Naive thymus-derived CD4-positive, alpha-beta T cell (primary cell): ENCODE measurements at regions of chr2 and their contacts with region 1.

Region 1: DNA sequence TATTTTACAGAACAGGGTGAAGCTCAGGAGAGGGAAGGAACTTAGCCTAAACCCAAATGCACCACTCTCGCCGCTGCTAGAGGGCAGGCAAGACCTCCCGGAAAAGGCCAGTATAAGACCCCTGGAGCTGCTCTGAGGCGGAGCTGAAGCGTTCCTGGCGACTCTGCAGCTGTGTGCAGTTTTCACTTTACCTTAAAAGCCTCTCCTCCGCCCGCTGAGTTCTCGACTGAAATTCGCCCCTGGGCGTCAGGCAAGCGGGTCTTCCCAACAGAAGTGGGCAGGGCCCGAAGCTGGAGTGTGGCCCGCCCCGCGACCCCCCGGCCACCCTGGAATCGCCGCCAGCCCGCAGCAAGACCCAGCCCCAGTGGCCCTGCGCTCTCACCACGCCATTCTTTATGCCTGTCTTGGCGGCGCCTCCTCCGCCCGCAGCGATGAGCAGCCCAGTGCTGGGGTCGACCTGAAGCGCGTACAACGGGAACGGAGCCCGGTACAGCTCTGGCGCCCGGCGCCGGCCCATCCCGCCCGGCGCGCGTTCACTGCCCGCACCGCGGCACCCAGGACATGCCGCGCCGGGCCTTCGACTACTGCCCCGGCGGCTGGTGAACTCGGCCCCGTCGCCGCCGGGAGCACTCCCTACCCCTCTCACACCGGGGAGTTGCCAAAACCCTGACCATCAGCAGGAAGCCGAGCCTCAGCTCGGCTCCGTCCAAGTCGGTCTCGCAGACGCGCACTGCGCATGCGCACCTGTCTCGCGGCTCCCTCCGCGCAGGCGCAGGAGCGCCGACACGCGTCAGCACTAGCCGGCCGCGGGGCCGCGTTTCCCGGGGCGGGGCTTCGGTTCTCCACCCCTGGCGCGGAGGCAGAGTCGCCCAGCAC is at the start of gene PREB:
- DNase-seq: peak; percentile 92 to 100 (median 97)
- ATAC-seq: peak; percentile 97
- H3K4me3 ChIP-seq: peak within 1 kb of the TSS; percentile 96
- H3K4me3 Mint-ChIP-seq: peak within 1 kb of the TSS; percentile 88 to 97 (median 92)
- H3K27ac ChIP-seq: peak within 1 kb of the TSS; percentile 97
- H3K27ac Mint-ChIP-seq: peak within 1 kb of the TSS; percentile 88 to 99 (median 97)
- H3K4me1 ChIP-seq: peaks cover 12 to 13% of the 10 kb centered on the region in 2 donors
- H3K4me1 Mint-ChIP-seq: peaks cover 10 to 32% (median 21%) of the 10 kb centered on the region in 7 donors
- H3K27me3 ChIP-seq: no peaks in the 10 kb centered on the region
- H3K27me3 Mint-ChIP-seq: peaks cover 0 to 6% (median 0%) of the 10 kb centered on the region in 5 donors
- total RNA-seq, gene PREB: 25.4 to 72.3 (median 53.2) TPM

Region 2: GRCh38 chr2:26785431-26786206 is 348.5 kb before region 1 on chr2 and contains the start of gene CENPA:
- CTCF ChIA-PET with region 1: no interaction called
- POLR2A ChIA-PET with region 1: no interaction called
- intact Hi-C with region 1: loop called in 1 of 2 experiments (anchors 5 kb)
- DNase-seq: peak; percentile 86 to 98 (median 96)
- ATAC-seq: peak; percentile 100
- H3K4me3 ChIP-seq: peak within 1 kb of the TSS; percentile 78
- H3K4me3 Mint-ChIP-seq: peak within 1 kb of the TSS; percentile 81 to 97 (median 88)
- H3K27ac ChIP-seq: peak within 1 kb of the TSS; percentile 60
- H3K27ac Mint-ChIP-seq: peak within 1 kb of the TSS; percentile 65 to 97 (median 89)
- H3K4me1 ChIP-seq: peaks cover 0 to 4% of the 10 kb centered on the region in 2 donors
- H3K4me1 Mint-ChIP-seq: peaks cover 10 to 34% (median 11%) of the 10 kb centered on the region in 7 donors
- H3K27me3 ChIP-seq: no peaks in the 10 kb centered on the region
- H3K27me3 Mint-ChIP-seq: peaks cover 0 to 26% (median 24%) of the 10 kb centered on the region in 5 donors
- total RNA-seq, gene CENPA: 0.37 to 25.6 (median 0.73) TPM in 3 of 5 experiments, not detected in the others

Region 3: GRCh38 chr2:27050281-27050995 is 83.7 kb before region 1 on chr2:
- CTCF ChIA-PET with region 1: no interaction called
- POLR2A ChIA-PET with region 1: interaction called, 11 read pairs
- intact Hi-C with region 1: loop called (anchors 1 kb)
- DNase-seq: peak; percentile 77 to 95 (median 94)
- ATAC-seq: peak; percentile 76
- H3K4me3 ChIP-seq: peak overlapping the region; percentile 99
- H3K4me3 Mint-ChIP-seq: peak overlapping the region; percentile 86 to 100 (median 99)
- H3K27ac ChIP-seq: peak overlapping the region; percentile 84
- H3K27ac Mint-ChIP-seq: peak overlapping the region; percentile 96 to 100 (median 100)
- H3K4me1 ChIP-seq: peaks cover 8 to 15% of the 10 kb centered on the region in 2 donors
- H3K4me1 Mint-ChIP-seq: peaks cover 10 to 34% (median 19%) of the 10 kb centered on the region in 7 donors
- H3K27me3 ChIP-seq: no peaks in the 10 kb centered on the region
- H3K27me3 Mint-ChIP-seq: peaks cover 0 to 8% (median 4%) of the 10 kb centered on the region in 5 donors

Region 4: DNA sequence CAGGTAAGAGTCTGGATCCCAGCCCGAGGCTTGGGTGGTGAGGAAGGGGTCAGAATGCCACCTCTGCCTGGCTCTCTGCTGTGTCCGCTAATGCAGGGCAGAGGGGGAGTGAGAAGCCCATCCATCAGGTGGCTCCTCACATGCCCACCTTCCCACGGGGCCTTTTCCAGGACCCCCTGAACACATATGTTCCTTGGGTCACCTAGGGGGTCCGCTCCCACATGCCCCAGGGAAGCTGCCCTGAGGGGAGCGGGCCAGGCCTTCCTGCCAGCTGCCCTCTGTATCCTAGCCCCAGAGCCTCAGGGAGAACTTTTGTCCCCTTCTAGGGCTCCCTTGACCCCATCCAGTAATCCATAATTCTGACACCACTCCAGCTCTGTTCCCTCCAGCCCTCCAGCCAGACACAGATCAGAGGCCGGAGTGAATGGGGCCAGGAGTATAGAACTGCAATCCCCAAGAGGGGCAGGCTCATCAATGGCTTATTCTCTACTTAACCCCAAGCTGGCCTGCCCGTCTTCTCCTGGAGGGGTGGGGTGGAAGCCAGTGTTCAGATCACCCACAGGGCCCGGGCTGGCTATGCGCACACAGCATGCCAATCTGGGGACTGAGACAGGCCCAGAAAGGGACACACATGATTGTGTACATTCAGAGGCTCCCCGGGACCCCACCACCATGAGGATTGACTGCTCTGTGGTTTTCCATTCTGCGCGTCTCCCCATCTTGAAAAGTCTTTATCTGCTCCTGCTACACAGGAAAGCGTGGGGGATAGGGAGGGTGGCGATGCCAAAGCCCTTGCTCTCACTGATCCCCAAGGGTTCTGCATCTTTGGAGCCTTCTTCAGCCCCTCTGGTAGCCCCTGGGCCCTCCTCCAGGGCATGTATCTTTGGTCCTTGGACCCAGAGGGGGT is 54.7 kb before region 1 on chr2:
- CTCF ChIA-PET with region 1: no interaction called
- POLR2A ChIA-PET with region 1: interaction called, 7 read pairs
- intact Hi-C with region 1: loop called in 1 of 2 experiments (anchors 1 kb)
- DNase-seq: no peak
- ATAC-seq: no peak
- H3K4me3 ChIP-seq: no peak overlapping the region
- H3K4me3 Mint-ChIP-seq: no peak overlapping the region
- H3K27ac ChIP-seq: no peak overlapping the region
- H3K27ac Mint-ChIP-seq: peak overlapping the region in 4 of 9 donors; percentile 79 to 97 (median 96)
- H3K4me1 ChIP-seq: peaks cover 18 to 32% of the 10 kb centered on the region in 2 donors
- H3K4me1 Mint-ChIP-seq: peaks cover 27 to 53% (median 45%) of the 10 kb centered on the region in 7 donors
- H3K27me3 ChIP-seq: no peaks in the 10 kb centered on the region
- H3K27me3 Mint-ChIP-seq: no peaks in the 10 kb centered on the region

Region 5: DNA sequence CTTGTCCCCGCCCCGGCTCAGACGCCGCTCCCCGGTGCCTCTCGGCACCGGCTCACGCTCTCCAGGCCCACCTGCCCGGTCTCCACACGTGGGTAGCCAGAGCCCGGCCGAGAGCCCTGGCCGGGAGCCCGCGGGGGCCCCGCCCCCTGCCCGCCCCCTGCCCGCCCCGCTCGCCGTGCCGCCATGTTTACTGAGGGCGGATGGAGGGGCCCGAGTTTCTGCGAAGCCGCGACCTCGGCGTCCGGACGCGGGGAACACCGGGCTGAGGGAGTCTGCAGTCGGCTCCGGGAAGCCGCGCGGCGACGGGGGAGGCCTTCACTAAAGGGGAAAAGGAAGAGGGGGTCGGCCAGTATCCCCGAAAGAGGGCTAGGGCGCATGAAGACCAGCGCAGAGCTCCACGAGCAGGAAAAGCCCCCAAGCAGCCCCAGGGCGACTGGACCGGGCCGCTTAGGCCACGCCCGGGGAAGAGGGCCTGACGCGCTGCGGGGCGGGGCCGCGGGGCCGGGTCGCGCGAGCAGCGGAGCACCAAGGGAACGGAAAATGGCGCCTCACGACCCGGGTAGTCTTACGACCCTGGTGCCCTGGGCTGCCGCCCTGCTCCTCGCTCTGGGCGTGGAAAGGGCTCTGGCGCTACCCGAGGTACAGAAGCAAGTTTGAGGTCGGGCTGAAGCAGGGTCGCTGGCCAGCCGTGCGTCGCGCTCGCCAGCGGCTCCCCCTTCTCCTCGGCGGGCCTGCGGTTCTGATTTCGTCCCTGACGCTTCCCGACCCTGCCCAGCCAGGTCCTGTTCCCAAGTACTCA is 77.9 kb after region 1 on chr2 and contains the starts of genes ATRAID and SLC5A6:
- CTCF ChIA-PET with region 1: interaction called, 4 read pairs
- POLR2A ChIA-PET with region 1: interaction called, 5 read pairs
- intact Hi-C with region 1: loop called (anchors 1 kb)
- DNase-seq: peak; percentile 86 to 93 (median 92)
- ATAC-seq: peak; percentile 93
- H3K4me3 ChIP-seq: peak within 1 kb of the TSS; percentile 91
- H3K4me3 Mint-ChIP-seq: peak within 1 kb of the TSS; percentile 89 to 100 (median 99)
- H3K27ac ChIP-seq: peak within 1 kb of the TSS; percentile 100
- H3K27ac Mint-ChIP-seq: peak within 1 kb of the TSS; percentile 99 to 100 (median 100)
- H3K4me1 ChIP-seq: peaks cover 14 to 17% of the 10 kb centered on the region in 2 donors
- H3K4me1 Mint-ChIP-seq: peaks cover 18 to 49% (median 42%) of the 10 kb centered on the region in 7 donors
- H3K27me3 ChIP-seq: no peaks in the 10 kb centered on the region
- H3K27me3 Mint-ChIP-seq: no peaks in the 10 kb centered on the region
- total RNA-seq, gene ATRAID: 71.0 to 113 (median 90.7) TPM
- total RNA-seq, gene SLC5A6: 25.6 to 203 (median 44.3) TPM

Region 6: DNA sequence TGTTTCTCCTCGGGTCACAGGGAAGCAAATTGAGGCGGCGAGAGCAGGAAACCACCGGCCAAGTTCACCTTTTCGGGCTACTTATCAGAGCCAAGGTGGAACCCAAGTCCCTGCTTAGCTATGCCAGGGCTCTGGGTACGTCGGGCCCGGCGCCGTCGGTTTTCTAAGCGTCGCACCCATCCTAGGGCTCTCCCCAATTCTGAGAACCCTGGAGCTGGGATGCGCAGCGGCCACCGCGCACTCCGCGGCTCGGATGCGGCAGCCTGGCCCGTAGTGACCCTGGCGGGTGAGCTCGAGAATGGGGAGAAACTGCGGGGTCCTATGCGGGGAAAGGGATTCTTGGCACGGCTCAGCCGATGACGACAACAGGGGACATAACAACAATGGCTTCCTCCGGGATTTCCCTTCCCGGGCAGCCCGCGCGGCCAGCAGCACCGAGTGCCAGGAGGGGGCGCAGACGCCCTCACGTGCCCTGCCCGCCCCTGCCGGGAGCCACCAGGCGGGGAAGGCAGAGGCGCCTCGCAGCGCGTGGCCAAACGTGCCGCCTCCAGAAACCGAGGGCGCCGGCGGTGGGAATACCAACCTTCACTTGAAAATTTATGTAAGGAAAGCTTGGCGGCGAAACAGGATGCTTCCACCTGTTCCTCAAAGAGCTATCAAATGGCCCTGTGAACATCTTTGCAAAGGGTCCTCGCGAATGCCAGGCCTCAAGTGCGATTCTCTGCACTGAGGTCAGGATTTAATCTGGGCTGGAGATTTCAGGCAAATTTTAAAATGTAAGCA is 130.8 kb after region 1 on chr2:
- CTCF ChIA-PET with region 1: no interaction called
- POLR2A ChIA-PET with region 1: no interaction called
- intact Hi-C with region 1: loop called in 1 of 2 experiments (anchors 1 kb)
- DNase-seq: peak in 8 of 9 donors; percentile 39 to 63 (median 46)
- ATAC-seq: peak; percentile 85
- H3K4me3 ChIP-seq: peak overlapping the region; percentile 59
- H3K4me3 Mint-ChIP-seq: peak overlapping the region in 9 of 10 donors; percentile 59 to 97 (median 85)
- H3K27ac ChIP-seq: no peak overlapping the region
- H3K27ac Mint-ChIP-seq: peak overlapping the region in 2 of 9 donors; percentile 2 to 38
- H3K4me1 ChIP-seq: peaks cover 8 to 23% of the 10 kb centered on the region in 2 donors
- H3K4me1 Mint-ChIP-seq: peaks cover 23 to 33% (median 29%) of the 10 kb centered on the region in 7 donors
- H3K27me3 ChIP-seq: peaks cover 6 to 18% of the 10 kb centered on the region in 2 donors
- H3K27me3 Mint-ChIP-seq: peaks cover 34 to 47% (median 40%) of the 10 kb centered on the region in 5 donors

Region 7: DNA sequence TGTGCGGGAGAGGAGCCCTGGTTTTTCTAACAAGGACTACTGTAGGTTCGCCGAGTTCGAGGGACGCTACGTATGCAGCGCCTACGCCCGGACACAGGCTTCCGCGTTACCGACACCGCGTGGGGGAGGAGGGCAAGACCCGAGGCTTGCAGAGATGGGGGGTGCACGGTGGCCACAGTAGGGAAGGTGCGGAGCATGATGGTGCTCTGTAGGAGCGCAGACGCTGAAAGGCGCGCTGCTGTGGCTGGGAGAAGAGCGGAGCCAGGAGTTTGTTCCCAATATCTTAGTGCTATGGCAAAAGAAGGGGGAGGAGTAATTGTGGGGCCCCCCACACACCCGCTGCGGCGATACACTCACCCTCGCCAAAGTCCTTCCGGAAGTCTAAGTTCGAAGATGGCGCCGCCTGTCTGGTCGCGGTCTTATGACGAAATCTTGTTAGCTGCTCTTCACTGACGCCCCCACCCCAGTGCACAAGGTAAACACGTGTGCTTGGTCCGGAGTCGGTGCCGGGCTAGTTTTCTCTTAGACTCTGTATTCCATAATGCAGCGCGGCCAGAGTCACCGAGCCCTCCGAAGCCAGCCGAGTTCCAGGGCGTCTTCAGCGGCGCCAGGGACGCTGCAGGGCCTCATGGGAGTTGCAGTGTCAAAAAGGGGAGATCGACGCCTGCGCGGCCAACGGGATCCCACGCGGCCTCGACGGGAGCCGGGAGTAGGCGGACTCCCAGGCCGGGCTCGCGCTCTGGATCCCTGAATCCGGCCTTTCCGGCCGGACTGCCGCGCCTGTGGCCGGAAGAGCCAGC is 222.4 kb after region 1 on chr2 and contains the start of gene GTF3C2:
- CTCF ChIA-PET with region 1: no interaction called
- POLR2A ChIA-PET with region 1: no interaction called
- intact Hi-C with region 1: loop called in 1 of 2 experiments (anchors 1 kb)
- DNase-seq: peak; percentile 76 to 94 (median 92)
- ATAC-seq: peak; percentile 85
- H3K4me3 ChIP-seq: peak within 1 kb of the TSS; percentile 96
- H3K4me3 Mint-ChIP-seq: peak within 1 kb of the TSS; percentile 95 to 100 (median 98)
- H3K27ac ChIP-seq: peak within 1 kb of the TSS; percentile 91
- H3K27ac Mint-ChIP-seq: peak within 1 kb of the TSS; percentile 96 to 100 (median 99)
- H3K4me1 ChIP-seq: peaks cover 24 to 34% of the 10 kb centered on the region in 2 donors
- H3K4me1 Mint-ChIP-seq: peaks cover 38 to 63% (median 56%) of the 10 kb centered on the region in 7 donors
- H3K27me3 ChIP-seq: no peaks in the 10 kb centered on the region
- H3K27me3 Mint-ChIP-seq: no peaks in the 10 kb centered on the region
- total RNA-seq, gene GTF3C2: 68.0 to 106 (median 78.3) TPM